ENCODE measurements at regions of chr7 and their contacts with region 1.

Region 1: DNA sequence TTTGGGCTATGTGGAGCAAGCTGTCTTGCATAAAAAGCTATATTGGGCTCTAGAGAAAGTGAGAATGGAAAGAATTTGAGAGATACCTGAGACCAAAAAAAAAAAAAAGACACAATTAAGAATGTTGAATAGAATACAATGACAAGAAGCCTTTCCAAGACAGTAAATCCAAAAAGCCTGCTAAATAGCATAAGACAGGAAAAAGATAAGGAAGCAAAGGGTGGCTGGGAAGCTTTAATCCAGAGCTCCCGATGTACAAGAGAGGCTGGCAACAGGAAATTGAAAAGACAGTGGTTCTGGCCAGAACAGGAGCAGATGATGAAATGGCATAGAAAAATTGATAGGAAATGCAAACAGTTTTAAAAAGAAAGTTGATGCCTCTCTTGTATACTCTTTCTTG is 174.9 kb downstream of the CACNA2D1 start:
- DNase-seq: no peak
- ATAC-seq: no peak
- H3K4me3 ChIP-seq: no peak overlapping the region
- H3K27ac ChIP-seq: no peak overlapping the region
- H3K4me1 ChIP-seq: no peaks in the 10 kb centered on the region
- H3K27me3 ChIP-seq: no peaks in the 10 kb centered on the region
- CTCF ChIP-seq: no peak
- EP300 ChIP-seq: no peak
- POLR2A ChIP-seq: no peak
- RAD21 ChIP-seq: no peak

Region 2: DNA sequence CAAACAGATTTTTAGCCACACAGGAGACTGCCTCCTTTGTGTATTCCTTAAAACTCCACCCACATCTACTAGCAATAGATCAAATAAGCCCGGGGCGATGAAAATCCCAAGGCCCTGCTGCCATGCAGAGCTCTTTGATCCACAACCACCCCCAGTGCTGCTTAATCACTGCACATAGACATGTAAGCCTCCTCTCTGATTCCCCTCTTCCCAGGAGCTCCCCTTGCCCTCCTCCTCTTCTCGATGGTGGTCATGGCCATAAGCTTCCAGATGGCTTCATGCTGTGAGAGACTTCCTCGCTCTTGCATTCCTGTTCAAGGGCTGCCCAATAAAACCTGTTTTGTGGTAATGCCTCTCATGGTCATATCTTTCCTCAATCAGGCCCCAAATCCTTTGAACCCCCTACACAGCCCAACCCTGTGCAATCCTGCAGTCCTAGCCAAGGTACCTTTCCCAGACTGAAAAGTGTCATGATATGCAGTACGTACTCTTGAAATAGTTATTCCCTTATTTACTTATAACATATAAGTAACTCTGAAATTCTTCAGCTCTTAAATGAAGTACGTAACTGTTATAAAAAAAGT is 16.4 kb after region 1 on chr7:
- CTCF ChIA-PET with region 1: interaction called, 4 read pairs
- POLR2A ChIA-PET with region 1: interaction called, 5 read pairs
- RAD21 ChIA-PET with region 1: interaction called, 3 read pairs
- SMC1A ChIA-PET with region 1: interaction called, 33 read pairs
- in situ Hi-C with region 1: no loop called
- intact Hi-C with region 1: no loop called
- DNase-seq: no peak
- ATAC-seq: no peak
- H3K4me3 ChIP-seq: no peak overlapping the region
- H3K27ac ChIP-seq: no peak overlapping the region
- H3K4me1 ChIP-seq: no peaks in the 10 kb centered on the region
- H3K27me3 ChIP-seq: no peaks in the 10 kb centered on the region
- CTCF ChIP-seq: no peak
- EP300 ChIP-seq: no peak
- POLR2A ChIP-seq: no peak
- RAD21 ChIP-seq: no peak